HEK293 (cell line): ENCODE measurements at regions of chr10 and their contacts with region 1.

Region 1: DNA sequence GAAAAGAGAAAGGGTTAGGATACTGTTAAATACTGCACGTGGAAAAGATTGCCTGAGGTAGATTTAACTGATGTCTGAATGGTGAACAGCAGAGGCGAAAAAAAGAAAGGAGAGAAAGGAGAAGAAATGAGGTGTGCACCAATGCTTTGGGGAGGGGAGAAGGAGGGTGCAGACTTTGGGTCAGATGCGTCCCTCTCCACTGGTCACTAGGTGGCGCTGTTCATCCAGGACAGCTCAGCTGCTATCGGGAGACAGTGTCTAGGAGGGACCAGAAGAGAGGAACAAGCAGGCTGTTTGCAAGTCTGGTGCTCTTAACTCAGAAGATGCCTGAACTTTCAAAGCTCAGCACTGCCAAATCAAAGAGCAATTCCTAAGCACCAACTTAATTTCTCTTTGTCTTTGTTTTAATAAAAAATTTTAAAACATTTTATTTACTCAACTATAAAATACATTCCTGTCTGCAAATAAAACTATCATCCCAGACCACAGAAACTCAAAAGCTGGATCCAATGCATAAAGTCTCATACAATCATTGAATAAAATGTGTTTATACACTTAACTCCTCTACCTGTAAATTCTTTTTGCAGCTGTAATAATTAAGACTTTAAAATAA is 83.9 kb upstream of the PDLIM1 start:
- H3K4me3 ChIP-seq: no peak overlapping the region
- H3K27ac ChIP-seq: no peak overlapping the region
- H3K4me1 ChIP-seq: no peaks in the 10 kb centered on the region
- CTCF ChIP-seq: peak; percentile 94

Region 2: DNA sequence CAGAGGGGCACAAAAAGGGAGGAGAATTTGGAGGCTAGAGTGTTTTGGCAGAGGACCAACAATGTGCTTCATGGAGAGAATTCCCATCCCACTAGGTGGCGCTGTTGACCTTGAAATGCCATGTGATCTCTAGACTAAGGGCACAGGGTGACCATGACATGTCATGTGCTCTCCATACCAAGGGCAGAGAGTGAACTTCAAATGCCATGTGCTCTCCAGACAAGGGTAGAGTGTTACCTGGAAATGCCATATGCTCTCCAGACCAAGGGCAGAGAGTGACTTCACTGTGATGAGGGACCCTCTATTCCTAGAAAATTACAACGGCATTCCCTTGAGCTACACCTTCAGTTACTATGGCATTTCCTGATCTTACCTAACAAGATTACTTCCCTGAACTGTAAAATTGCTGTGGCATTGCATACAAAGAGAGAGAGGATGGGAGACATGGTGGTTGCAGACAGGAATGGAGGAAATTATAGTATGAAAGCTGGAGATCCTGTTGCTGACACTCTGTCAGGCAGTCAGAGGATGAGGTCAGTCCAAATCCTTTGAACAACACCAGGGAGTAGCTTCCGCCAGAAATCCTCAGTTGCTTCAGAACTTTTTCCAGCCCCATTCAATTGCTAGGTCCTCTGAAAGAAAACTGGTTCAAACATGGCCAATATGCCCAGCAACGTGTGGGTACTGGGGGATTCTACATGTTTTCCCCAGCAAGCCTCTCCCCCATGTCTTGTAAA is 241.5 kb before region 1 on chr10:
- CTCF ChIA-PET with region 1: interaction called, 15 read pairs
- POLR2A ChIA-PET with region 1: no interaction called
- H3K4me3 ChIP-seq: no peak overlapping the region
- H3K27ac ChIP-seq: no peak overlapping the region
- H3K4me1 ChIP-seq: no peaks in the 10 kb centered on the region
- CTCF ChIP-seq: peak; percentile 81

Region 3: GRCh38 chr10:95327367-95327766 is 47.3 kb before region 1 on chr10:
- CTCF ChIA-PET with region 1: no interaction called
- POLR2A ChIA-PET with region 1: no interaction called
- H3K4me3 ChIP-seq: no peak overlapping the region
- H3K27ac ChIP-seq: no peak overlapping the region; the same call in 1 of the 2 replicates
- H3K4me1 ChIP-seq: peaks cover 9% of the 10 kb centered on the region
- CTCF ChIP-seq: no peak

Region 4: DNA sequence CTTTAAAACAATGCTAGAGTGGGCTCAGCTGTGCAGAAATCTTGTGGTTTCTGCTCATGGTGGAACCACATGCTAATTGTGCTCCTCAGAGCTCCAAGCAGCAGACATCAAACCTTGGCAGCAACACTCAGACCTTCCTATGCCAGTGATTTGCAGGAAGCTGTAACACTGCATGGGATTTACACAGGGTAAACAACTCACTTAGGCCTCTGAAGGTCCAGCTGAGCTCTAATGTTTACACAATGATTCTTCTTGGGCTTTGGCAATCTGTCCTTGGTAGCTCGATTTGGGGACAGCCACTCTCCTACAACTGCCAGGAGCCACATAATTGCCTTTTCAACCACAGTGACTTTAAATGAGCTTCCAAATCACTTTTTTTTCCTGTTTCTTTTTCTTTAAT is 13.8 kb after region 1 on chr10:
- CTCF ChIA-PET with region 1: interaction called, 106 read pairs
- POLR2A ChIA-PET with region 1: no interaction called
- H3K4me3 ChIP-seq: no peak overlapping the region
- H3K27ac ChIP-seq: no peak overlapping the region
- H3K4me1 ChIP-seq: peaks cover 11% of the 10 kb centered on the region; the same call in 1 of the 2 replicates
- CTCF ChIP-seq: no peak

Region 5: GRCh38 chr10:95423164-95424005 is 48.7 kb after region 1 on chr10:
- CTCF ChIA-PET with region 1: interaction called, 97 read pairs
- POLR2A ChIA-PET with region 1: no interaction called
- H3K4me3 ChIP-seq: no peak overlapping the region
- H3K27ac ChIP-seq: no peak overlapping the region
- H3K4me1 ChIP-seq: no peaks in the 10 kb centered on the region
- CTCF ChIP-seq: no peak

Region 6: DNA sequence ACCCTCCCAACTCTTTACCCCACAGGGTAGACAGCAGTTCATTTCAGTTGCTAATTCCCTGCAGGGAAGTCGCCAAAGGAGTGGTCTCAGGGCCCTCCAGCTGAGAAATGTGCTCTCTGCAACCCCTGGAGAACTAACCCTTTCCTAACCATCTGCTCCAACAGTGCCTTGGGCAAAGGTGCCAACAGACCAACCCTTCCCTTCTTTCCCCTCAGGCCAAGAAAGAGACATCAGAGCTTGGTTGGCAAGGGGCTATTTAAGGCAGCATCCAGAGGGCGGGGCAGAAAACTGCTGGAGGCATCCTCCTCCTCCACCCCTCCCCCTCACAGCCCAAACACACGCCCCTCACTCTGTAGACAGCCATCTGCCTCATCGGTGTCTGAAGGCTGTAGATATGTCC is 184.8 kb after region 1 on chr10:
- CTCF ChIA-PET with region 1: interaction called, 12 read pairs
- POLR2A ChIA-PET with region 1: no interaction called
- H3K4me3 ChIP-seq: no peak overlapping the region
- H3K27ac ChIP-seq: no peak overlapping the region
- H3K4me1 ChIP-seq: peaks cover 4% of the 10 kb centered on the region; the same call in 1 of the 2 replicates
- CTCF ChIP-seq: no peak

Region 7: GRCh38 chr10:95841661-95842498 is 467.2 kb after region 1 on chr10:
- CTCF ChIA-PET with region 1: interaction called, 18 read pairs
- POLR2A ChIA-PET with region 1: no interaction called
- H3K4me3 ChIP-seq: no peak overlapping the region
- H3K27ac ChIP-seq: no peak overlapping the region
- H3K4me1 ChIP-seq: no peaks in the 10 kb centered on the region
- CTCF ChIP-seq: no peak